AG04449 (cell line): ENCODE measurements at regions of chr7 and their contacts with region 1.

Region 1: GRCh38 chr7:80428161-80429054 is 83.5 kb downstream of the GNAT3 start:
- DNase-seq: no peak
- H3K4me3 ChIP-seq: no peak overlapping the region
- CTCF ChIP-seq: peak; percentile 59

Region 2: GRCh38 chr7:80060218-80060806 is 368.1 kb before region 1 on chr7:
- CTCF ChIA-PET with region 1: interaction called, 13 read pairs
- POLR2A ChIA-PET with region 1: no interaction called
- DNase-seq: no peak
- H3K4me3 ChIP-seq: no peak overlapping the region
- CTCF ChIP-seq: peak; percentile 14

Region 3: DNA sequence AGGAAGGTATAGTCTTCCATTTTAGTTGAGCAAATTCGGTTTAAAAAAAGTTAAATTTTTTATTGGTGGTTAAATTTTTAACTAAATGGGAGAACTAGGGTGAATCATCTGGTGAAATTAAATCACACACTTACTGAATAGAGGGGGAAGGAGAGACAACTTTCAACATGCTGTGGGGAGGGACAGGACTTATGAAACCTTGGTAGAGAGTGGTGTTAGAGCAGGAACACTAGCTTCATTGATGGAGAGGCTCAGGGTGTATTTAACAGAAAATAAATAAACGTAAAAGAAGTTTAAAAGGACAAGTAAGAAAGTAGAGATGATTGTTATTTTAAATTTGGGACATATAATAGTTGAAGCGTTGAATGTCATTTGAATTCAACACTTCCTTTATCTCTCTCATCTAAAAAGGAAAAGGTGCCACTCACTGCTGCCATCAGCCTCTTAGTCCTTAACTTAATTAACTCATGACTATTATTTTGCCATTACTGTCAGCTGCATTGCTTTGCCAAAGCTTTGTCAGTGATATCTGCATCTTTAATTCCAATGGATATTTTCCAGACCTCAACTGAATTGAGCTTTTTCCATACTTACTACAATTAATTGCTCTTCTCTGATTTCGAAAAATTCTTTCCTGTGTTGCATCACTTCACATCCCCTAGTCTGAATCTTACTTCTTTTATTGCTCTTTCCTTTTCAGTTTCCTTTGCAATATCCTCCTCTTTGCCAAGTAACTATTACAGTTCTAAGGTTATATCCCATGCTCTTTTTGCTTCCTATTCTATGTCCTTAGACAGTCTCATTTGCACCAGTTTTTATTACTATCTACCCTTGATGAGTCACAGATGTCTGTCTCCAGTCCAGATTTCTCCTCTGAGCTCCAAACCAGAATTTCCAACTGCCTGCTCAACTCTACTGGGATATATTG is 11.8 kb after region 1 on chr7:
- CTCF ChIA-PET with region 1: interaction called, 38 read pairs
- POLR2A ChIA-PET with region 1: no interaction called
- DNase-seq: peak; percentile 44
- H3K4me3 ChIP-seq: no peak overlapping the region
- CTCF ChIP-seq: no peak

Region 4: GRCh38 chr7:80450621-80451308 is 22.4 kb after region 1 on chr7:
- CTCF ChIA-PET with region 1: interaction called, 16 read pairs
- POLR2A ChIA-PET with region 1: no interaction called
- DNase-seq: no peak
- H3K4me3 ChIP-seq: no peak overlapping the region
- CTCF ChIP-seq: no peak

Region 5: DNA sequence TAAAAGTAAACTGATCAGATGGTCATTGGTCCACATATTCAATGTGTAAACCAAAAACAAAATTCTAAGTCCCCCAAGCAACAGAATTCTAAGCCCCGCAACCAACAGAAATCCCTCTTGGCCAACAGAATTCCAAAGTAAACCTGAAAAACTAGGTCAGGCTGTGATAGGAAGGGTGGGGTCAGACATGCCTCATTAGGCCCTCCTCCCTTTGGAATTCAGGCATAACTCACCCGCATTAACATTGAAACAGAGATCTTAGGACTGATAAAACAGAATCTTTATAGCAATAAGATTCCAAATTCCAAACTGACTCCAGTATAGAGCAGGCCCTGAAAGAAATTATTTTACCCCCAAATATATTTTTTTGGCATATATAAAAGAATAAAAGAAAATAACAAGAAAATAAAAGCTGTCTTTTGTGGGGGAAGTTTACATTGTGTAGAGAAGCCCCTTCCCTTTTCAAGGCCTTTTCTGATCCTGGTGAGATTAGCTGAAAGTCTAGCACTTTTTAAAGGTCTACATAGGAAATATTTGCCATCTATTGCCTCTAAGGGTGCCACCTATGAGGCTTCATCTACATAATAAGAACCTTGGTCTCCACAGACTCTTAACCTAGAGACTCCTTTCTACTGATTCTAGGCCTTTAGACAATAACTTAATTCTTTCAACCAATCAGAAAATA is 52.9 kb after region 1 on chr7:
- CTCF ChIA-PET with region 1: no interaction called
- POLR2A ChIA-PET with region 1: no interaction called
- DNase-seq: no peak
- H3K4me3 ChIP-seq: no peak overlapping the region
- CTCF ChIP-seq: no peak

Region 6: GRCh38 chr7:80659120-80660055 is 231.0 kb after region 1 on chr7:
- CTCF ChIA-PET with region 1: interaction called, 59 read pairs
- POLR2A ChIA-PET with region 1: no interaction called
- DNase-seq: no peak
- H3K4me3 ChIP-seq: no peak overlapping the region
- CTCF ChIP-seq: peak; percentile 26

Region 7: GRCh38 chr7:80699045-80699638 is 270.7 kb after region 1 on chr7:
- CTCF ChIA-PET with region 1: interaction called, 10 read pairs
- POLR2A ChIA-PET with region 1: no interaction called
- DNase-seq: no peak
- H3K4me3 ChIP-seq: no peak overlapping the region
- CTCF ChIP-seq: peak; percentile 27